ENCODE measurements at regions of chr1 and their contacts with region 1.

Region 1: DNA sequence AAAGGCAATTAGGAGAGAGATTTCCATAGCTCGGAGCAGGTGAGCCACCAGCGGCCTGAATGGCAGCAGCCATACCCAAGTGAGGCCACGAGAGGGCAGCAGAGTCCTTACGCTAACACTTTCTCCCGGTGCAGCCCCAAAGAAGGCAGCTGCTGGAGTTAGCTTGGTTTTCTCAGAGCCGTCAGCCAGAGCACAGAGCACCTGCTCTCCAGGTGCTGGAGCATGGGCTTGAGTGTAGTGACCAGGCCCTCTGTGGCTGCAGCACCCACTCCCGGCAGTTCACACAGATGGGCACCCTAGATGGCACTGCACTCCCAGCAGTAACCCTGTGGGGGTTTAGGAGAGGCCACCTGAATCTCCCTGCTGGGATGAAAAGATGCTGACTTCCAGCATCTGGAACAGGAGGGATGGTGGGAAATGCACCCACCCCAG is 45.8 kb downstream of the TMCC2 start:
- DNase-seq: peak; percentile 93
- H3K4me3 Mint-ChIP-seq: no peak overlapping the region
- H3K27ac Mint-ChIP-seq: no peak overlapping the region
- H3K4me1 Mint-ChIP-seq: peaks cover 27% of the 10 kb centered on the region
- H3K27me3 Mint-ChIP-seq: peaks cover 9% of the 10 kb centered on the region
- CTCF ChIP-seq: peak; percentile 100

Region 2: GRCh38 chr1:205284343-205285144 is 11.0 kb after region 1 on chr1:
- CTCF ChIA-PET with region 1: interaction called, 124 read pairs
- POLR2A ChIA-PET with region 1: interaction called, 30 read pairs
- intact Hi-C with region 1: no loop called
- DNase-seq: peak; percentile 100
- H3K4me3 Mint-ChIP-seq: peak overlapping the region; percentile 24
- H3K27ac Mint-ChIP-seq: peak overlapping the region; percentile 96
- H3K4me1 Mint-ChIP-seq: peaks cover 75% of the 10 kb centered on the region
- H3K27me3 Mint-ChIP-seq: no peaks in the 10 kb centered on the region
- CTCF ChIP-seq: no peak

Region 3: GRCh38 chr1:205294175-205294913 is 20.8 kb after region 1 on chr1:
- CTCF ChIA-PET with region 1: interaction called, 124 read pairs
- POLR2A ChIA-PET with region 1: interaction called, 8 read pairs
- intact Hi-C with region 1: no loop called
- DNase-seq: peak; percentile 97
- H3K4me3 Mint-ChIP-seq: no peak overlapping the region
- H3K27ac Mint-ChIP-seq: peak overlapping the region; percentile 77
- H3K4me1 Mint-ChIP-seq: peaks cover 55% of the 10 kb centered on the region
- H3K27me3 Mint-ChIP-seq: no peaks in the 10 kb centered on the region
- CTCF ChIP-seq: no peak

Region 4: GRCh38 chr1:205300886-205301821 is 27.6 kb after region 1 on chr1:
- CTCF ChIA-PET with region 1: interaction called, 75 read pairs
- POLR2A ChIA-PET with region 1: interaction called, 8 read pairs
- intact Hi-C with region 1: no loop called
- DNase-seq: peak; percentile 91
- H3K4me3 Mint-ChIP-seq: no peak overlapping the region
- H3K27ac Mint-ChIP-seq: peak overlapping the region; percentile 23
- H3K4me1 Mint-ChIP-seq: peaks cover 48% of the 10 kb centered on the region
- H3K27me3 Mint-ChIP-seq: no peaks in the 10 kb centered on the region
- CTCF ChIP-seq: no peak

Region 5: DNA sequence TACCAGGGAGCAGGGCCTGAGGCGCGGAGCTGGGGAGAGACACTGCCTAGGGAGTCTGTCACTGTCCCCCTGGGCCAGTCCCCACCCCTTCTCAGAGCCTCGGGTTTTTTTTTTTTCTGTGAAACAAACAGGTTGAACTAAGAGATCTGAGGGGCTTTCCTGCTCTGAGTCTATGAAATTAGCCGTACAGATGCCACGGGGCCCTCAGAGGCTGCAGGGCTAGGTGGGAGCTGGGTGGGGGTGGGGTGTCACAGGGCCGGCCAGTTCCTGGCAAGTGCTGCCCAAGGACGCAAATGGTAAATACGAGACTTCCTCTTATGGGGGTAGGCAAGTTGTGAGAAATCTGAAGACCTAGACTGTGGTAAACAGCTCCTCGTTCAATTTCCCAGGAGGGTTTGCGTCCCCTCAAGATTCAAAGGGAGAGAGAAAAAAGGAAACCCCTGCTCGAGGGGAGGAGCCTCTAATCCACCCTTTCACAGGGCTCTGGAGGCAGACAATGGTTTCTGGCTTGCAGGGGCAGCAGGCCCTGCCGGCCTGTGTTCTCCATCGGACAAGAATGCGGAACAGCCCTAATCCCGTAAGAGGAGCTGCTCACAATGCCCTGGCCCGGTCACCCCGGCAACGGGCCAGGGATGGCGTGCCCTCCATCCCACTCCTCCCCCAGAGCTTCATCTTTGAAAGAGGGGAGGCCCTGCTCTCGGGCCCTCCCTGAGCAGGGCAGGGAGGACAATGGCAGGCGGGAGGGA is 40.2 kb after region 1 on chr1:
- CTCF ChIA-PET with region 1: interaction called, 1,857 read pairs
- POLR2A ChIA-PET with region 1: interaction called, 210 read pairs
- intact Hi-C with region 1: no loop called
- DNase-seq: no peak
- H3K4me3 Mint-ChIP-seq: no peak overlapping the region
- H3K27ac Mint-ChIP-seq: peak overlapping the region; percentile 33
- H3K4me1 Mint-ChIP-seq: peaks cover 33% of the 10 kb centered on the region
- H3K27me3 Mint-ChIP-seq: no peaks in the 10 kb centered on the region
- CTCF ChIP-seq: no peak

Measured in MCF 10A (cell line).